HCT116 (cell line): ENCODE measurements at regions of chr17 and their contacts with region 1.

Region 1: GRCh38 chr17:58447039-58447975 is 30.0 kb upstream of the RNF43 start:
- DNase-seq: peak; percentile 95
- ATAC-seq: peak; percentile 99
- H3K4me3 ChIP-seq: no peak overlapping the region
- H3K27ac ChIP-seq: no peak overlapping the region
- H3K4me1 ChIP-seq: no peaks in the 10 kb centered on the region
- H3K27me3 ChIP-seq: no peaks in the 10 kb centered on the region
- CTCF ChIP-seq: peak; percentile 98 to 99 (median 99)
- POLR2A ChIP-seq: no peak
- RAD21 ChIP-seq: peak; percentile 100

Region 2: GRCh38 chr17:58121925-58122324 is 325.4 kb before region 1 on chr17:
- CTCF ChIA-PET with region 1: no interaction called
- POLR2A ChIA-PET with region 1: no interaction called
- RAD21 ChIA-PET with region 1: no interaction called
- intact Hi-C with region 1: loop called (anchors 1 kb)
- DNase-seq: peak; percentile 59
- ATAC-seq: peak; percentile 86
- H3K4me3 ChIP-seq: no peak overlapping the region
- H3K27ac ChIP-seq: no peak overlapping the region
- H3K4me1 ChIP-seq: no peaks in the 10 kb centered on the region
- H3K27me3 ChIP-seq: peaks cover 31% of the 10 kb centered on the region
- CTCF ChIP-seq: peak; percentile 55 to 93 (median 73)
- POLR2A ChIP-seq: no peak
- RAD21 ChIP-seq: peak; percentile 89

Region 3: GRCh38 chr17:58200017-58200633 is 247.2 kb before region 1 on chr17:
- CTCF ChIA-PET with region 1: interaction called, 11 read pairs
- POLR2A ChIA-PET with region 1: no interaction called
- RAD21 ChIA-PET with region 1: interaction called in 1 of 2 experiments, 3 read pairs
- intact Hi-C with region 1: loop called (anchors 1 kb)
- DNase-seq: peak; percentile 63
- ATAC-seq: peak; percentile 98
- H3K4me3 ChIP-seq: no peak overlapping the region
- H3K27ac ChIP-seq: no peak overlapping the region
- H3K4me1 ChIP-seq: peaks cover 0 to 3% of the 10 kb centered on the region in 2 experiments; a peak in 1 of 4 replicates
- H3K27me3 ChIP-seq: no peaks in the 10 kb centered on the region; the same call in 1 of the 2 replicates
- CTCF ChIP-seq: peak; percentile 58 to 90 (median 88)
- POLR2A ChIP-seq: no peak
- RAD21 ChIP-seq: no peak; the same call in 1 of the 2 replicates

Region 4: DNA sequence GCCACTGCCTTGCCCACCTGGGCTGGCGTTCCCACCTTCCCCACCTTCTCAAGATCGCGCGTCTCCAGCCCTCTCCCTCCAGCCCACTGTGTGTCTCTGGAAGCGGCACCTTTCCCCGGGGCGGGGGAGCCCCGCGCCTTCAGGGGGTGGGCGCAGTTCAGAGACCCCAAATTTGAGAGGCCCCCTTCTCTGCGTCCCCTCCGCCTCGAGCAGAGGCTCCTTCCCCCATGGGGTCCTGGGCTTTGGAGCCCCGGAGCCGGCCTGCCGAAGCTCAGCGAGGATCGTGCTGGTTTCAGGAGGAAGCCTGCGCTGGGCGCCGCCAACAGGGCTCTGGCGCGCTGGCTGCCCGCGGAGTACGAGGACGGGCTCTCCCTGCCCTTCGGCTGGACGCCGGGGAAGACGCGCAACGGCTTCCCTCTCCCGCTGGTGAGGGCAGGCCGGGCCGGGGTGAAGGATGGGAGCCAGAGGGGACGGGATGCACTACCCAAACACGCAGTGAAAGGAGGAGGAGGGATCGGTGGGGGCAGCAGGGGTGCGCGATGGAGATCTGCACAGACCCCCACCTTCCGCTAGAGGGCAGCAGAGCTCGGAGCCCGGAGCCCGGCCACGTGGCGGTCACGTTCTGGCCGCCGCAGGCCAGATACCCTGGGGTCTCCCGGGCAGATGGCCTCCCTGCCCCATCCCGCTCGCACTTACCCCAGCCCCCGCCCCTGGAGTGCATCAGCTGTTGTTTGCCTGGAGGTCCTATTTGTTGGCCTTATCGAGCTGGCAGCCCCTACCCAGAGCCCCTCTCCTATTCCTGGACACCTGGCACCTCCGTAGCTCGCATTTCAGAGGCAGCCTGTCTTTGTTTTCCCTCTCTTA is 197.8 kb before region 1 on chr17:
- CTCF ChIA-PET with region 1: interaction called, 4 read pairs
- POLR2A ChIA-PET with region 1: no interaction called
- RAD21 ChIA-PET with region 1: no interaction called
- intact Hi-C with region 1: loop called (anchors 2 kb)
- DNase-seq: peak; percentile 35
- ATAC-seq: peak; percentile 94
- H3K4me3 ChIP-seq: no peak overlapping the region
- H3K27ac ChIP-seq: no peak overlapping the region
- H3K4me1 ChIP-seq: peaks cover 0 to 6% of the 10 kb centered on the region in 2 experiments; a peak in 1 of 4 replicates
- H3K27me3 ChIP-seq: no peaks in the 10 kb centered on the region; the same call in 1 of the 2 replicates
- CTCF ChIP-seq: peak; percentile 68 to 96 (median 92); a peak in 5 of 6 replicates
- POLR2A ChIP-seq: no peak
- RAD21 ChIP-seq: peak; percentile 71

Region 5: GRCh38 chr17:58277107-58277801 is 170.1 kb before region 1 on chr17:
- CTCF ChIA-PET with region 1: interaction called, 3 read pairs
- POLR2A ChIA-PET with region 1: no interaction called
- RAD21 ChIA-PET with region 1: no interaction called
- intact Hi-C with region 1: loop called (anchors 1 kb)
- DNase-seq: peak; percentile 18
- ATAC-seq: peak; percentile 74
- H3K4me3 ChIP-seq: no peak overlapping the region
- H3K27ac ChIP-seq: no peak overlapping the region
- H3K4me1 ChIP-seq: peaks cover 0 to 3% of the 10 kb centered on the region in 2 experiments; a peak in 1 of 4 replicates
- H3K27me3 ChIP-seq: no peaks in the 10 kb centered on the region
- CTCF ChIP-seq: peak; percentile 73 to 80 (median 74); a peak in 5 of 6 replicates
- POLR2A ChIP-seq: no peak
- RAD21 ChIP-seq: peak; percentile 80

Region 6: GRCh38 chr17:58303971-58304725 is 143.2 kb before region 1 on chr17:
- CTCF ChIA-PET with region 1: interaction called, 11 read pairs
- POLR2A ChIA-PET with region 1: no interaction called
- RAD21 ChIA-PET with region 1: no interaction called
- intact Hi-C with region 1: loop called (anchors 1 kb)
- DNase-seq: peak; percentile 62
- ATAC-seq: peak; percentile 96
- H3K4me3 ChIP-seq: no peak overlapping the region
- H3K27ac ChIP-seq: no peak overlapping the region; the same call in 1 of the 2 replicates
- H3K4me1 ChIP-seq: peaks cover 0 to 9% of the 10 kb centered on the region in 2 experiments; a peak in 2 of 4 replicates
- H3K27me3 ChIP-seq: no peaks in the 10 kb centered on the region
- CTCF ChIP-seq: peak; percentile 82 to 99 (median 99)
- POLR2A ChIP-seq: no peak
- RAD21 ChIP-seq: peak; percentile 68

Region 7: DNA sequence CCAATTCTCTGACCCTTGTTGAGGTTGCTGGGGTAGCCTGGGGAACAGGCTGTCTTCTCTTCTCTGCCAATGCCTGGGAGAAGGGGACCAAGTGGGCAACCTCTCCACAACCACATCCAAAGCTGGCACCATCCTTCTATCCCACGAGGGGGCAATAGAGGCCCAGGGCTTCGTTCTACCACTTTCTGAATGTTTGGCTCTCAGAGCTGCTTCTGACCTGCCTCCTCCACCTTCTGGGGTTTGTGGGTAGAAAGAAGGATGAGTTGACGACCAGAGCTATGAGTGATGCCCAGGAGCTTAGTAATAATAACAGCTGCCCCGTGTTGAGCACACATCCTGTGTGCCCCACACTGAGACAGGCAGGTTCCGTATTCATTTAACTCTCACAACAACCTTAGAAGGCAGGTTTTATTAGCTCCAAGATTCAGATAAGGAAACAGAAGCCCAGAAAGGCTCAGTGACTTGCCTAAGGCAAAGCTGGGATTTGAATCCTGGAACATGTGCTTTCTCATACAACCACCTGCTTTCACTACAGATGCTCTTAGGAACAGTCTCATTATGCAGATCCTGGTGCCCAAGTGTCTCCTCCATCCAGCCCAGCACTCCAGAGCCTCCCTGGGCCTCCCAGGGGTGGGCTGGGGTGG is 129.8 kb before region 1 on chr17:
- CTCF ChIA-PET with region 1: interaction called, 124 read pairs
- POLR2A ChIA-PET with region 1: interaction called, 3 read pairs
- RAD21 ChIA-PET with region 1: interaction called, 5 to 29 read pairs
- intact Hi-C with region 1: loop called (anchors 1 kb)
- DNase-seq: peak; percentile 72
- ATAC-seq: peak; percentile 95
- H3K4me3 ChIP-seq: no peak overlapping the region
- H3K27ac ChIP-seq: peak overlapping the region; percentile 30; the same call in 1 of the 2 replicates
- H3K4me1 ChIP-seq: peaks cover 8 to 17% of the 10 kb centered on the region in 2 experiments; a peak in 3 of 4 replicates
- H3K27me3 ChIP-seq: no peaks in the 10 kb centered on the region
- CTCF ChIP-seq: peak; percentile 97 to 99 (median 99)
- POLR2A ChIP-seq: no peak
- RAD21 ChIP-seq: peak; percentile 100

Region 8: DNA sequence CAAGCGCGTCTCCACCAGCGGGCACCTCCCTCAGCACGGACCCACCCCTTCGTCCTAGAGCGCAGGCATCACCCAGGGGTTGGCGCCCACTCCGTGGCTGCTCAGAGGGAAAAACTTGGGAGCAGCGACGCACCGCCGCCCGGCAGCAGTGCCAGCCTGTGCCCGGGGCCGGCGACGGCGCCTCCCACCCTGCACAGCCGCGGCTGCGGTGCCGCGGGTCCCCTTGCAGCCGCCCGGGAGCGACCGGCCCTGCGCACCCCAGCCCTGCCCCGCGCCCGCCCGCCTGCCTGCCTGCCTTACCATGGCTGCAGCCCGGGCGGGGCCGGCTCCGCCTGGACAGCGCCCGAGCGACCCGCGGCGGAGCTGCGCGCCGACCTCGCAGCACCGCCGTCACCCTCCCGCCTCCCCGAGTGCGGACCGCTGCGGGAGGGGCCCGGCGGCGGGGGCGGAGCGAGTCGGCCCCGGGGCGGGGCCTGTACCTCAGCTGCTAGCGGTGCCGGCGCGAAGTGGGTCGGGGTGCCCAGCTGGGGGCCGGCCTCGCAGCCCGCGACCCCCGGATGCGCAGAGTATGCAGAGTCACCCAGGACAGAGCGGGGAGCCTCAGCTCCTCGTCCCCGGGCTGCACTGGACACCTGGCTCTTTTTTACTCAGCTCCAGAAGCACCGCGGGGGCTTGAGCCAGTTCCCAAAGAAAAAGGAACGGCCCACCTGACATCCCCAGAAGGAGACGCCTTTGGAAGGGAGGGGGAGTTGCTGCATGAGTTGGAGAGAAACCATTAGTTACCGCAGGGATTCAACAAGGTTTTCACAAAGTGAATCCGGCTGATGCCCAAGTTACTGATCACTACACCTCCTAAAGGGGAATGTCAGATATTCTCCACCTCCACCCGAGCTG is 84.6 kb after region 1 on chr17:
- CTCF ChIA-PET with region 1: no interaction called
- POLR2A ChIA-PET with region 1: no interaction called
- RAD21 ChIA-PET with region 1: no interaction called
- intact Hi-C with region 1: no loop called
- DNase-seq: no peak
- ATAC-seq: peak; percentile 84
- H3K4me3 ChIP-seq: peak overlapping the region; percentile 34 to 56
- H3K27ac ChIP-seq: peak overlapping the region; percentile 14; the same call in 1 of the 2 replicates
- H3K4me1 ChIP-seq: peaks cover 25 to 46% of the 10 kb centered on the region in 2 experiments
- H3K27me3 ChIP-seq: no peaks in the 10 kb centered on the region; the same call in 1 of the 2 replicates
- CTCF ChIP-seq: no peak
- POLR2A ChIP-seq: no peak
- RAD21 ChIP-seq: no peak